ENCODE measurements at regions of chr9 and their contacts with region 1.

Region 1: GRCh38 chr9:136902259-136902821 is 16.0 kb downstream of the TRAF2 start:
- DNase-seq: peak; percentile 94 to 97
- ATAC-seq: peak; percentile 65 to 79
- H3K4me3 ChIP-seq: peak overlapping the region; percentile 21
- H3K27ac ChIP-seq: peak overlapping the region; percentile 96
- H3K4me1 ChIP-seq: peaks cover 73% of the 10 kb centered on the region
- CTCF ChIP-seq: no peak
- EP300 ChIP-seq: peak; percentile 47 to 80; a peak in 3 of 5 replicates
- POLR2A ChIP-seq: peak; percentile 9; the same call in 1 of the 2 replicates
- RAD21 ChIP-seq: 0 out of 5 replicates have a peak, but pooled peaks of 1 of the 2 experiments have one; percentile 9

Region 2: GRCh38 chr9:136849038-136849959 is 53.0 kb before region 1 on chr9 and contains the start of gene PHPT1:
- CTCF ChIA-PET with region 1: interaction called, 39 read pairs
- POLR2A ChIA-PET with region 1: interaction called, 3 read pairs
- DNase-seq: peak; percentile 99 to 100
- ATAC-seq: peak; percentile 53 to 80
- H3K4me3 ChIP-seq: peak within 1 kb of the TSS; percentile 87
- H3K27ac ChIP-seq: peak within 1 kb of the TSS; percentile 96 to 97
- H3K4me1 ChIP-seq: peaks cover 22% of the 10 kb centered on the region
- CTCF ChIP-seq: no peak
- EP300 ChIP-seq: no peak
- POLR2A ChIP-seq: peak; percentile 72
- RAD21 ChIP-seq: 0 out of 5 replicates have a peak, but pooled peaks of 1 of the 2 experiments have one; percentile 17
- polyA plus RNA-seq, gene PHPT1: 104 and 123 TPM in 2 replicates

Region 3: DNA sequence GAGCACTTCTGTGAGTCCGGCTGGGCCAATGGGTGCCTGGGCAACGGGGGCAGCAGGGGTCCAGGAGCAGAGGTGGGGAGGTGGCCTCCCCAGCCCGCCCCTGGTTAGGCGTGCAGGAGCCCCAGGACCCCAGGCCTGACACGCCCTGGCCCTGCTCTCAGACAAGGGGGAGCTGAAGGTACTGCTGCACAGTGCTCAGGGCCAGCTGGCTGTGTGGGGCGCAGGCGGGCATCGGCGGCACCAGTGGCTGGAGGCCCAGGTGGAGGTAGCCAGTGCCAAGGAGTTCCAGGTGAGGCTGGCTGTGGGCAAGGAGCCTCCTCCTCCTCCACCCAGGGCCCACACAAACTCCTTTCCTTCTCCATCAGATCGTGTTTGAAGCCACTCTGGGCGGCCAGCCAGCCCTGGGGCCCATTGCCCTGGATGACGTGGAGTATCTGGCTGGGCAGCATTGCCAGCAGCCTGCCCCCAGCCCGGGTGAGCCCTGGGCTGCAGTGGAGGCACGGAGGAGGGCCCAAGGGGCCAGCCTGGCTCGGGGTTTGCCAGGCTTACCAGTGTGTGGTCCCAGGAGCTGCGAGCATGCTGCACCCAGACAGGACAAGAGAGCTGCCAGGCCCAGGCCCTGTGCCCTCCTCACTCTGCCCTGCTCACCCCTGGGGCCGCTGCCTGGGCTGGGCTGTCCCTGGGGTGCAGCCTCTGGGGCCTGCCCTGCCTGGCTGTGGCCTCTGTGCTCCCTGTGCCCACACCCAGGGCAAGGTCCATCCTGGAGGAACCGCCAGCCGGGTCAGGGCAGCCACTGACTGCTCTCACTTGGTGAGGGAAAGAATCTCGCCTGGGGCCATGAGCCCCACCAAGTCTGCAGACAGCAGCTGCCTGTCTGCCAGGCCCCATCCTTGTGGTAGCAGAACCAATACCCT is 43.2 kb before region 1 on chr9:
- CTCF ChIA-PET with region 1: interaction called, 13 read pairs
- POLR2A ChIA-PET with region 1: interaction called, 7 read pairs
- DNase-seq: peak in 1 of 2 experiments; percentile 50
- ATAC-seq: peak; percentile 27 to 64
- H3K4me3 ChIP-seq: no peak overlapping the region
- H3K27ac ChIP-seq: peak overlapping the region; percentile 79 to 89
- H3K4me1 ChIP-seq: peaks cover 73% of the 10 kb centered on the region
- CTCF ChIP-seq: no peak
- EP300 ChIP-seq: no peak
- POLR2A ChIP-seq: 0 out of 2 replicates have a peak, but pooled peaks have one; percentile 2
- RAD21 ChIP-seq: no peak

Region 4: DNA sequence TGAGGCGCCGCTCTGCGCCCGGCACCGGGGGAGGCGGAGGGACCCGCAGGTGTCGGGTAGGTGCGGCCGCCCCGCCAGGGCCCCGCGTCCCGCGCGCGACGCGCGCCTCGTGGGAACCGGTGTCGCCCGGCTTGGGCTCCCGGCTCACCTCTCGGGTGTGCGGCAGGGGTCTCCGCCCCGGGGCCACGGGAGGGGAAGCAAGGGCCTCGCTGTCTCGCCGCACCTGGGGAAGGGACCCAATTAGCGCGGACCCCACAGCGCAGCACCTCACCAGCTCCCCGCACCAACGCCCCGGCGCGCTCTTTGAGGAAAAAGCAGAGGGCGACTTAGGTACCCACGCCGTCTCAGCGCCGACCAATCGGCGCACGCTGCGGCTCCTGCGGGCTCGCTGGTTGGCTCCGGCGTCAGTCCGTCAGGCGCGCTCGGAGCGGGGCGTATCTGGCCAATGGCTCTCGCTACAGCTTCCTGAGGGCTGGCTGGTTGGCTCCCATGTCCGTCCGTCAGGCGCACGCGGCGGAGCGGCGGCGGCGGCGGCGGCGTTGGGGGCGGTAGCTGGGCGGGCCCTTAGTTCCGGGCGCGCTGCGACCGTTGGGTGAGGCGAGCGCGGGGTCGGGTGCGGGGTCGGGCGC is 16.3 kb before region 1 on chr9 and contains the start of gene TRAF2:
- CTCF ChIA-PET with region 1: interaction called, 139 read pairs
- POLR2A ChIA-PET with region 1: interaction called, 108 read pairs
- DNase-seq: peak; percentile 99 to 100
- ATAC-seq: peak; percentile 82 to 86
- H3K4me3 ChIP-seq: peak within 1 kb of the TSS; percentile 99
- H3K27ac ChIP-seq: peak within 1 kb of the TSS; percentile 98 to 99
- H3K4me1 ChIP-seq: peaks cover 57% of the 10 kb centered on the region
- CTCF ChIP-seq: no peak
- EP300 ChIP-seq: no peak
- POLR2A ChIP-seq: peak; percentile 93
- RAD21 ChIP-seq: no peak
- polyA plus RNA-seq, gene TRAF2: 23.8 and 24.5 TPM in 2 replicates

Region 5: DNA sequence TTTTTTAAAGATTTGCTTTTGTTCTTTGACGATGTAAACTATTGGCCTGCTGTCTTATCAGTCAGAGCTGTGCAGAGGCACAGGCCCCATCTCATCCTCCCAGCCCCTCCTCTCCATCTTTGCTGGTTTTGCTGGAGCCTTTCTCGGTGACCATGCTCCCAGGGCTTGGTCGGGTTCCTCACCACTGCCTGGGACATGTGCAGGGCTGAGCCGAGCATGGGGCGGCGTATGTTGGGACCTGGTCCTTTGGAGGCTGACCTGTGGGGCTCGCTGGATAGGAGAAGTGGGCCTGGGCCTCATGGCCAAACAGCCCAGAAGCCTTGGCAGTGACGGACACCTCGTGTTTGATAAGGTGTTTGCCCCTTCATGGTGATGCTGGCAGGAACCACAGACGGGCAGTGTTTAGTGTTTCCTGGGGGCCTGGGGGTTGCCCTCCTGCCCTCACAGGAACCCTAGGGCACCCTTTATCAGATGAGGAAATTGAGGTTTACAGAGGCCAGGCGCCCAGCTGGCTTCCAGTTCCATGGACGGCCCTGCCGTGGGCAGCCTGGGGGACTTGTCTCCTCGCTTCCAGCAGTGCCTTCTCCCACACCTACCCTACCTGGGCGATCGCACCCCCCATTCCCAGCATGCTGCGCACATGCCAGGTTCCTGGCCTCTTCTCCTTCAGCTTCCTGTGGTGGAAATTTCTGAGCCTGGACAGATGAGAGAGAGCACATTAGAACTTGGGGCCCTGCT is 11.5 kb after region 1 on chr9:
- CTCF ChIA-PET with region 1: interaction called, 11 read pairs
- POLR2A ChIA-PET with region 1: interaction called, 3 read pairs
- DNase-seq: no peak
- ATAC-seq: no peak
- H3K4me3 ChIP-seq: no peak overlapping the region
- H3K27ac ChIP-seq: peak overlapping the region in 1 of 2 experiments; percentile 46; a peak in 1 of 6 replicates
- H3K4me1 ChIP-seq: peaks cover 6% of the 10 kb centered on the region; the same call in 1 of the 3 replicates
- CTCF ChIP-seq: no peak
- EP300 ChIP-seq: no peak
- POLR2A ChIP-seq: no peak
- RAD21 ChIP-seq: no peak

Region 6: GRCh38 chr9:136926137-136926704 is 23.9 kb after region 1 on chr9:
- CTCF ChIA-PET with region 1: interaction called, 14 read pairs
- POLR2A ChIA-PET with region 1: interaction called, 7 read pairs
- DNase-seq: no peak
- ATAC-seq: peak; percentile 66 to 83
- H3K4me3 ChIP-seq: no peak overlapping the region
- H3K27ac ChIP-seq: peak overlapping the region in 1 of 2 experiments; percentile 54; a peak in 2 of 6 replicates
- H3K4me1 ChIP-seq: peaks cover 6% of the 10 kb centered on the region; the same call in 1 of the 3 replicates
- CTCF ChIP-seq: 0 out of 3 replicates have a peak, but pooled peaks have one; percentile 12
- EP300 ChIP-seq: no peak
- POLR2A ChIP-seq: no peak
- RAD21 ChIP-seq: 0 out of 5 replicates have a peak, but pooled peaks of 1 of the 2 experiments have one; percentile 14